B cell (primary cell): ENCODE measurements at regions of chr11 and their contacts with region 1.

Region 1: GRCh38 chr11:75248690-75249268 is 8.2 kb downstream of the TPBGL start:
- DNase-seq: peak; percentile 89
- ATAC-seq: peak; percentile 96
- H3K4me3 ChIP-seq: no peak overlapping the region
- H3K4me3 Mint-ChIP-seq: no peak overlapping the region
- H3K27ac ChIP-seq: no peak overlapping the region
- H3K27ac Mint-ChIP-seq: no peak overlapping the region
- H3K4me1 ChIP-seq: no peaks in the 10 kb centered on the region
- H3K4me1 Mint-ChIP-seq: peaks cover 1% of the 10 kb centered on the region
- H3K27me3 ChIP-seq: peaks cover 0 to 16% (median 4%) of the 10 kb centered on the region in 4 experiments
- H3K27me3 Mint-ChIP-seq: peaks cover 32% of the 10 kb centered on the region
- CTCF ChIP-seq: peak; percentile 100

Region 2: GRCh38 chr11:75022759-75023396 is 225.9 kb before region 1 on chr11:
- CTCF ChIA-PET with region 1: interaction called, 29 read pairs
- POLR2A ChIA-PET with region 1: no interaction called
- intact Hi-C with region 1: no loop called
- DNase-seq: peak; percentile 78
- ATAC-seq: peak; percentile 78
- H3K4me3 ChIP-seq: no peak overlapping the region
- H3K4me3 Mint-ChIP-seq: no peak overlapping the region
- H3K27ac ChIP-seq: no peak overlapping the region
- H3K27ac Mint-ChIP-seq: no peak overlapping the region
- H3K4me1 ChIP-seq: no peaks in the 10 kb centered on the region
- H3K4me1 Mint-ChIP-seq: no peaks in the 10 kb centered on the region
- H3K27me3 ChIP-seq: no peaks in the 10 kb centered on the region
- H3K27me3 Mint-ChIP-seq: no peaks in the 10 kb centered on the region
- CTCF ChIP-seq: peak; percentile 99

Region 3: GRCh38 chr11:75142714-75143419 is 105.9 kb before region 1 on chr11:
- CTCF ChIA-PET with region 1: interaction called, 284 read pairs
- POLR2A ChIA-PET with region 1: no interaction called
- intact Hi-C with region 1: loop called (anchors 1 kb)
- DNase-seq: peak; percentile 38
- ATAC-seq: peak; percentile 58
- H3K4me3 ChIP-seq: no peak overlapping the region
- H3K4me3 Mint-ChIP-seq: peak overlapping the region; percentile 8
- H3K27ac ChIP-seq: no peak overlapping the region
- H3K27ac Mint-ChIP-seq: no peak overlapping the region
- H3K4me1 ChIP-seq: peaks cover 8 to 19% of the 10 kb centered on the region in 2 donors
- H3K4me1 Mint-ChIP-seq: peaks cover 20% of the 10 kb centered on the region
- H3K27me3 ChIP-seq: peaks cover 0 to 3% (median 0%) of the 10 kb centered on the region in 4 experiments
- H3K27me3 Mint-ChIP-seq: peaks cover 19% of the 10 kb centered on the region
- CTCF ChIP-seq: no peak

Region 4: GRCh38 chr11:75150879-75151278 is 97.9 kb before region 1 on chr11 and contains the start of gene SLCO2B1:
- CTCF ChIA-PET with region 1: interaction called, 284 read pairs
- POLR2A ChIA-PET with region 1: no interaction called
- intact Hi-C with region 1: no loop called
- DNase-seq: no peak
- ATAC-seq: no peak
- H3K4me3 ChIP-seq: no peak within 1 kb of the TSS
- H3K4me3 Mint-ChIP-seq: no peak within 1 kb of the TSS
- H3K27ac ChIP-seq: no peak within 1 kb of the TSS
- H3K27ac Mint-ChIP-seq: no peak within 1 kb of the TSS
- H3K4me1 ChIP-seq: no peaks in the 10 kb centered on the region
- H3K4me1 Mint-ChIP-seq: no peaks in the 10 kb centered on the region
- H3K27me3 ChIP-seq: no peaks in the 10 kb centered on the region
- H3K27me3 Mint-ChIP-seq: peaks cover 23% of the 10 kb centered on the region
- CTCF ChIP-seq: no peak
- total RNA-seq, gene SLCO2B1: 1.2 and 1.3 TPM in 2 replicates

Region 5: GRCh38 chr11:75263944-75264349 is 15.2 kb after region 1 on chr11:
- CTCF ChIA-PET with region 1: interaction called, 12 read pairs
- POLR2A ChIA-PET with region 1: no interaction called
- intact Hi-C with region 1: no loop called
- DNase-seq: peak; percentile 63
- ATAC-seq: peak; percentile 35
- H3K4me3 ChIP-seq: no peak overlapping the region
- H3K4me3 Mint-ChIP-seq: peak overlapping the region; percentile 11
- H3K27ac ChIP-seq: no peak overlapping the region
- H3K27ac Mint-ChIP-seq: peak overlapping the region; percentile 12
- H3K4me1 ChIP-seq: peaks cover 33 to 58% of the 10 kb centered on the region in 2 donors
- H3K4me1 Mint-ChIP-seq: peaks cover 40% of the 10 kb centered on the region
- H3K27me3 ChIP-seq: no peaks in the 10 kb centered on the region
- H3K27me3 Mint-ChIP-seq: peaks cover 3% of the 10 kb centered on the region
- CTCF ChIP-seq: no peak

Region 6: GRCh38 chr11:75270896-75271418 is 22.2 kb after region 1 on chr11:
- CTCF ChIA-PET with region 1: interaction called, 18 read pairs
- POLR2A ChIA-PET with region 1: no interaction called
- intact Hi-C with region 1: no loop called
- DNase-seq: peak; percentile 54
- ATAC-seq: no peak
- H3K4me3 ChIP-seq: no peak overlapping the region
- H3K4me3 Mint-ChIP-seq: no peak overlapping the region
- H3K27ac ChIP-seq: no peak overlapping the region
- H3K27ac Mint-ChIP-seq: no peak overlapping the region
- H3K4me1 ChIP-seq: peaks cover 9 to 14% of the 10 kb centered on the region in 2 donors
- H3K4me1 Mint-ChIP-seq: peaks cover 14% of the 10 kb centered on the region
- H3K27me3 ChIP-seq: no peaks in the 10 kb centered on the region
- H3K27me3 Mint-ChIP-seq: no peaks in the 10 kb centered on the region
- CTCF ChIP-seq: peak; percentile 64

Region 7: GRCh38 chr11:75301131-75301530 is 52.4 kb after region 1 on chr11:
- CTCF ChIA-PET with region 1: no interaction called
- POLR2A ChIA-PET with region 1: no interaction called
- intact Hi-C with region 1: no loop called
- DNase-seq: no peak
- ATAC-seq: no peak
- H3K4me3 ChIP-seq: no peak overlapping the region
- H3K4me3 Mint-ChIP-seq: no peak overlapping the region
- H3K27ac ChIP-seq: no peak overlapping the region
- H3K27ac Mint-ChIP-seq: no peak overlapping the region
- H3K4me1 ChIP-seq: no peaks in the 10 kb centered on the region
- H3K4me1 Mint-ChIP-seq: no peaks in the 10 kb centered on the region
- H3K27me3 ChIP-seq: no peaks in the 10 kb centered on the region
- H3K27me3 Mint-ChIP-seq: peaks cover 2% of the 10 kb centered on the region
- CTCF ChIP-seq: no peak